ENCODE measurements at regions of chr2 and their contacts with region 1.

Region 1: GRCh38 chr2:166361351-166362153 is 14.2 kb downstream of the SCN9A start:
- DNase-seq: no peak
- ATAC-seq: peak; percentile 80

Region 2: GRCh38 chr2:166170356-166170755 is 191.2 kb before region 1 on chr2:
- intact Hi-C with region 1: no loop called
- DNase-seq: no peak
- ATAC-seq: no peak

Region 3: GRCh38 chr2:166516712-166517303 is 155.3 kb after region 1 on chr2:
- intact Hi-C with region 1: loop called in 1 of 2 experiments (anchors 10 kb)
- DNase-seq: peak in 1 of 2 donors; percentile 13
- ATAC-seq: no peak